ENCODE measurements at regions of chr12 and their contacts with region 1.

Region 1: DNA sequence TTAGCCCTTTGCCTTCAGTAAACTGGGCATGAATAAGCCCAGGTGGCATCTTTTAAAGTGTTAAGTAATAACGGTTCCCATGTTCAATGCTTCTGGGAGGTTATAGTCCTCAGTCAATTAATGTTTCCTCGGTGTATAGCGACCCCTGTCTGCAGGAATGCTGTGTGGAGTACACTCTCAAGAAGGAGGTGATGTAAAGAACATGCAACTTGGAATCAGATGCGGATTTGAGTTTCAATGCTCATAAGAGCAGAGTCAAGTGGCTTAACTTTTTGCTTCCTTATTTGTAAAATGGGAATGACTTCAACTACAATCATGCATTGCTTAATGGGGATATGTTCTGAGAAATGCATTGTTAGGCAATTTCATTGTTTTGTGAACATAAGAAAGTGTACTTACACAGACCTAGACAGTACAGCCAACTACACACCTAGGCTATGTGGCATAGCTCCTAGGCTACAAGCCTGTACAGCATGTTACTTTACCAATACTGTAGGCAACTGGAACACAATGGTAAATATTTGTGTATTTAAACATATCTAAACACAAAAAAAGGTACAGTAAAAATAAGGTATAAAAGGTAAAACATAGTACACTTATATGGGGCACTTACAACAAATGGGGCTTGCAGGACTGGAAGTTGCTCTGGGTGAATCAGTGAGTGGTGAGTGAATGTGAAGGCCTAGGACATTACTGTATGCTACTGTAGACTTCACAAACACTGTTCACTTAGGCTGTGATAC is 6.8 kb upstream of the MRPS35 start:
- DNase-seq: peak; percentile 59
- H3K4me3 ChIP-seq: no peak overlapping the region
- CTCF ChIP-seq: peak; percentile 72

Region 2: GRCh38 chr12:27673101-27673718 is 30.7 kb before region 1 on chr12:
- CTCF ChIA-PET with region 1: interaction called, 10 read pairs
- POLR2A ChIA-PET with region 1: no interaction called
- DNase-seq: no peak
- H3K4me3 ChIP-seq: no peak overlapping the region
- CTCF ChIP-seq: no peak

Measured in AG04449 (cell line).